ENCODE measurements at regions of chr22 and their contacts with region 1.

Region 1: GRCh38 chr22:27885977-27886842 is 32.8 kb downstream of the PITPNB start:
- DNase-seq: peak; percentile 39 to 64 (median 46)
- ATAC-seq: peak; percentile 68
- H3K4me3 ChIP-seq: no peak overlapping the region
- H3K27ac ChIP-seq: peak overlapping the region in 1 of 4 donors; percentile 5
- H3K4me1 ChIP-seq: peaks cover 18% of the 10 kb centered on the region
- H3K27me3 ChIP-seq: no peaks in the 10 kb centered on the region
- CTCF ChIP-seq: peak; percentile 67 to 88 (median 79)
- POLR2A ChIP-seq: no peak

Region 2: DNA sequence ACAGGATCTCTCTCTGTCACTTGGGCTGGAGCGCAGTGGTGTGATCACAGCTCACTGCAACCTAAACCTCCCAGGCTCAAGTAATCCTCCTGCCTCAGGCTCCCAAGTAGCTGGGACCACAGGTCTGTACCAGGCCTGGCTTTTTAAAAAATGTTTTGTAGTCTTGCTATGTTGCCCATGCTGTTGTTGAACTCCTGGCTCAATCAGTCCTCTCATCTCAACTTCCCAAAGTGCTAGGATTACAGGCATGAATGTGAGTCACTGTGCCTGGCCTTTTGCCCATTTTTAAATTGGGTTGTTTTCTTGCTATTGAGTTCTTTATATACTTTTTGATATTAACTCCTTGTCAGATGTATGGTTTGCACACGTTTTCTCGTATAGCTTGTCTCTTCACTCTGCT is 65.9 kb after region 1 on chr22:
- intact Hi-C with region 1: no loop called
- DNase-seq: peak in 1 of 4 donors; percentile 6
- ATAC-seq: no peak
- H3K4me3 ChIP-seq: no peak overlapping the region
- H3K27ac ChIP-seq: no peak overlapping the region
- H3K4me1 ChIP-seq: peaks cover 7% of the 10 kb centered on the region
- H3K27me3 ChIP-seq: no peaks in the 10 kb centered on the region
- CTCF ChIP-seq: no peak
- POLR2A ChIP-seq: no peak

Region 3: DNA sequence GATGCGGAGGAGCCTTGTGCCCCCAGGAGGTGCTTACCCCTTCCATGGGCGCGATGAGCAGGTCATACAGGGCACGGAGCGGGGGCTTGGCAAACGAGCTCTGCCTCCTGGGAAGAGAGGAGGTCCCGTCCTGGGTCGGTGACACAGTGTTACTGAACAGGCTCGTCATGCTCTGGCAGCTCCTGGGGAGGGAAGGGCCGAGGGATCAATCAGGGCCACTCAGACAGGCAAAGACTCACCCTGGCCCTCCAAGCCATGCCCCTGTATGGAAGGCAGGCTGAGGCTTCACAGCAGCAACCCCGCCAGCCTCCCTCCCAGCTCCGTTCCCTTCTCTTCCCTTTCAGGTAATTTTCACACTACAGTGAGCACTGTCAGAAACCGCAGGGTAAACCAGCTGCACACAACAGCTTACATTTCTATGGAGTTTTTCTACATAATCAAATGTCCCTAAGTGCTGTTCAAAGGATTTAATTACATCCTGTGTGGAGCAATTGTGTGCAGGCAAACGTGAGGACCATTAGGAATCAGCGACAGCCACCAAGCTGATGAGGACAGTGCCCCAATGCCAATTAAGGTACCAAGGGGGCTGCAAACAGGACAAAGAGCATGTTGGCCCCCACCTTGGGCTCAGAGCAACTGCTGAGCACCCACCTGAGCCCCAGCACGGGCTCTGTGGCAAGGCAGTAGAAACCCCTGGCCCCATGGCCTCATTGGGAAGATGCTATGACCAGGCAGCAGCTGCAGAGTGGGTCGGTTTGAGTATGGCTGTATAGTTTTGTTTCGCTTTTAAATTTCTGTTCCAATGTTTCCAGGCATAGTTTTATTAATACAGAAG is 128.2 kb after region 1 on chr22:
- intact Hi-C with region 1: loop called (anchors 5 kb)
- DNase-seq: peak in 2 of 4 donors; percentile 2 to 4
- ATAC-seq: no peak
- H3K4me3 ChIP-seq: no peak overlapping the region
- H3K27ac ChIP-seq: no peak overlapping the region
- H3K4me1 ChIP-seq: peaks cover 2% of the 10 kb centered on the region
- H3K27me3 ChIP-seq: no peaks in the 10 kb centered on the region
- CTCF ChIP-seq: no peak
- POLR2A ChIP-seq: no peak

Measured in body of pancreas (tissue), 4 donors.